Activated naive CD4-positive, alpha-beta T cell treated with anti-CD3 and anti-CD28 coated beads for 36 hours (primary cell): ENCODE measurements at regions of chr3 and their contacts with region 1.

Region 1: DNA sequence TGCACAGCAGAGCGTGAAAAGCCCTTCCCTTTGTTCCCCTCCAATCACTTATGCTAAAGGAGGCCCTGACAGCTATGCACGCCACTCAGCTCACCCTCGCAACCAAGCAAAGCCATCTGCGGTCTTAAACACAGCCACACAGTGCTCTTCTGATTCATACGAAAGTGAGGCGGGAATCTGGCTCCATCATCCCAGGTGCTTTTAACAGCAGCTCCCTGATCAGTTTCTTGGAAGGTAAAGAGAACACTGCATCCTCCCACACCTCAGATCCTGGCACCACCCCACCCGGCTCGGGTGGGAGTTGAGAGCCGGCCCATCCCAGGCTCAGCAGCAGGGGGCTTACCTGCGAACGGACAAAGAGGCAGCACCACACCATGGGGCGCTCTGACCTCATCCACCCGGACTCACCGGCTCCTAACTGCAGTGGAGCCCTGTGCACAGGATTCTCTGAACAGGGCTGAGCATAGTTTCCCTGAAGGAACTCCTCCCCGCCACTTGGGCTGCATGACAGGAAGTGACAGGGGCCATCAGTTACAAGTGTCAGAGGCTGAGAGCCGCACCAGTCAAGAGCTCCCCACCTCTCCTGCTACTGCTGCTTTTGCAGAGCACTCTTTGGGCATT is 114.3 kb upstream of the ARHGEF3 start:
- DNase-seq: peak; percentile 86
- H3K4me3 Mint-ChIP-seq: peak overlapping the region; percentile 86
- H3K27ac Mint-ChIP-seq: peak overlapping the region; percentile 92
- H3K4me1 Mint-ChIP-seq: peaks cover 72% of the 10 kb centered on the region
- H3K27me3 Mint-ChIP-seq: no peaks in the 10 kb centered on the region

Region 2: GRCh38 chr3:56753206-56753820 is 162.8 kb before region 1 on chr3:
- CTCF ChIA-PET with region 1: no interaction called
- intact Hi-C with region 1: loop called (anchors 1 kb)
- DNase-seq: peak; percentile 73
- H3K4me3 Mint-ChIP-seq: no peak overlapping the region
- H3K27ac Mint-ChIP-seq: peak overlapping the region; percentile 44
- H3K4me1 Mint-ChIP-seq: peaks cover 56% of the 10 kb centered on the region
- H3K27me3 Mint-ChIP-seq: no peaks in the 10 kb centered on the region

Region 3: GRCh38 chr3:56862352-56863074 is 53.6 kb before region 1 on chr3:
- CTCF ChIA-PET with region 1: interaction called, 5 read pairs
- intact Hi-C with region 1: loop called (anchors 1 kb)
- DNase-seq: peak; percentile 46
- H3K4me3 Mint-ChIP-seq: no peak overlapping the region
- H3K27ac Mint-ChIP-seq: peak overlapping the region; percentile 76
- H3K4me1 Mint-ChIP-seq: peaks cover 73% of the 10 kb centered on the region
- H3K27me3 Mint-ChIP-seq: no peaks in the 10 kb centered on the region

Region 4: GRCh38 chr3:56894881-56895431 is 21.1 kb before region 1 on chr3:
- CTCF ChIA-PET with region 1: interaction called, 5 read pairs
- intact Hi-C with region 1: loop called (anchors 1 kb)
- DNase-seq: peak; percentile 60
- H3K4me3 Mint-ChIP-seq: peak overlapping the region; percentile 12
- H3K27ac Mint-ChIP-seq: peak overlapping the region; percentile 30
- H3K4me1 Mint-ChIP-seq: peaks cover 68% of the 10 kb centered on the region
- H3K27me3 Mint-ChIP-seq: no peaks in the 10 kb centered on the region

Region 5: GRCh38 chr3:56942523-56942922 is 26.4 kb after region 1 on chr3:
- CTCF ChIA-PET with region 1: interaction called, 5 read pairs
- intact Hi-C with region 1: loop called (anchors 1 kb)
- DNase-seq: peak; percentile 30
- H3K4me3 Mint-ChIP-seq: no peak overlapping the region
- H3K27ac Mint-ChIP-seq: no peak overlapping the region
- H3K4me1 Mint-ChIP-seq: peaks cover 23% of the 10 kb centered on the region
- H3K27me3 Mint-ChIP-seq: peaks cover 2% of the 10 kb centered on the region

Region 6: DNA sequence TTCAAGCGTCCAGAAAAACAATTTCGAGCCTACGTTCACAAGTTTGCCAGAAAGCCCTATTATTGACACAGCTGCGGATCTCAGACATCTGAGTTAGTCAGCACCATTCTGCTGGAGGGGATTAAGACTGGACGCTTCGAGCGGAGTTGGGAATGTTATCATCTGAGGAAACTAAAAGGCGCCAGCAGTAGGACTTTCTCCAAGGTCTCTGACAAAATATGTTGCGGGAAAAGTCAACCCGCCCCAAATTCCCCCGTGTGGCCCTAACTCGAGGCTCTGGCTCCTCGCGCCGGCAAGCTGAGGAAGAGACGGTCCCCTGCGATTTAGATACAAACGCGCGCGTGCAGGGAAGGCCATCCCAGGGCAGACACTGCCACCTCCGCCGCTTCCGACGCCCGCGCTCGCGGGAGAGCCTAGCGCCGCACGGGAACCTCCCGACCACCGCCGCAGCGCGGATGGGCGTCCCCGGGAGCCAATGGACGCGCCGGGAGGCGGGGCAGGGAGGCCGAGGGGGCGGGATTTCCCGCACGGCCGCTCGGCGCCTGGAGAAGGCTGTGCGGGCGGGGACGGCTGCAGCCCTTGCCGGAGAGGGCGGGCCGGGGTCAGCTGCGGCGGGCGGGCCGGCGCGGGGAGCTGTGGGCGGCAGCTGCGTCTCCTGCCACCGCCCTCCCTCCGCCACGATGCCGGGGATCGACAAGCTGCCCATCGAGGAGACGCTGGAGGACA is 311.3 kb after region 1 on chr3 and contains the start of gene APPL1:
- CTCF ChIA-PET with region 1: no interaction called
- intact Hi-C with region 1: loop called (anchors 5 kb)
- DNase-seq: peak; percentile 93
- H3K4me3 Mint-ChIP-seq: peak within 1 kb of the TSS; percentile 88
- H3K27ac Mint-ChIP-seq: peak within 1 kb of the TSS; percentile 63
- H3K4me1 Mint-ChIP-seq: peaks cover 26% of the 10 kb centered on the region
- H3K27me3 Mint-ChIP-seq: no peaks in the 10 kb centered on the region
- total RNA-seq, gene APPL1: 30.8 to 35.1 TPM

Region 7: DNA sequence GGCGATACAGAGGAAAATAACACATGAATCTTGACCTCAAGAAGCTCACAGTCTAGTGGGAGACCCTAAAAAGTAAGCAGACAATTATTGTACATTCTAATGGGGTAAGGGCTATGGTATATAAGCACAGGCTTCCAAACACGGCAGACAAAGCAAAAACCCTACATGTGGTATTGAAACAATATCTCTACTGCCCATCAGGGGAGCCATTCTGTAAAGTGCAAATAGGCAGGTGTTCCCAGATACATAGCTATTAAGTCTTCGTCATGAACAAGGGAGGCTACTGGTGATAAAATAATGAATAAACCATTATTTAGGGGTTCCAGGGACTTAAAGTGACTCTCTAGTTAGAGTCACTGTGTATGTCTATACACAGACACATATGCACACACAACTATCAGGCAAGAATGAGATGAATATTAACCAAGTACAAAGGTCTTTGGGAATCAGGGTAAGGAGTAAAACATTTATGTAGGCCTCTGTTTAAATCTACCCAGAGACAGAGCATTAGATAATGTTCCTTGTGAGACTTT is 415.1 kb after region 1 on chr3:
- CTCF ChIA-PET with region 1: no interaction called
- intact Hi-C with region 1: no loop called
- DNase-seq: no peak
- H3K4me3 Mint-ChIP-seq: no peak overlapping the region
- H3K27ac Mint-ChIP-seq: no peak overlapping the region
- H3K4me1 Mint-ChIP-seq: no peaks in the 10 kb centered on the region
- H3K27me3 Mint-ChIP-seq: no peaks in the 10 kb centered on the region